ENCODE measurements at regions of chr6 and their contacts with region 1.

Region 1: GRCh38 chr6:35731736-35732532 is 4.9 kb upstream of the ARMC12 start:
- DNase-seq: peak; percentile 91 to 98 (median 96)
- ATAC-seq: peak; percentile 79
- H3K4me3 ChIP-seq: peak overlapping the region; percentile 94
- H3K4me3 Mint-ChIP-seq: peak overlapping the region; percentile 76 to 92 (median 88)
- H3K27ac ChIP-seq: peak overlapping the region; percentile 97
- H3K27ac Mint-ChIP-seq: peak overlapping the region; percentile 90 to 99 (median 94)
- H3K4me1 ChIP-seq: peaks cover 68 to 83% of the 10 kb centered on the region in 2 donors
- H3K4me1 Mint-ChIP-seq: peaks cover 50 to 87% (median 75%) of the 10 kb centered on the region in 7 donors
- H3K27me3 ChIP-seq: no peaks in the 10 kb centered on the region
- H3K27me3 Mint-ChIP-seq: no peaks in the 10 kb centered on the region

Region 2: GRCh38 chr6:35516642-35517041 is 215.3 kb before region 1 on chr6:
- CTCF ChIA-PET with region 1: interaction called, 64 read pairs
- POLR2A ChIA-PET with region 1: no interaction called
- intact Hi-C with region 1: no loop called
- DNase-seq: no peak
- ATAC-seq: no peak
- H3K4me3 ChIP-seq: no peak overlapping the region
- H3K4me3 Mint-ChIP-seq: no peak overlapping the region
- H3K27ac ChIP-seq: no peak overlapping the region
- H3K27ac Mint-ChIP-seq: peak overlapping the region in 1 of 9 donors; percentile 48
- H3K4me1 ChIP-seq: peaks cover 0 to 7% of the 10 kb centered on the region in 2 donors
- H3K4me1 Mint-ChIP-seq: peaks cover 0 to 2% (median 0%) of the 10 kb centered on the region in 7 donors
- H3K27me3 ChIP-seq: peaks cover 0 to 3% of the 10 kb centered on the region in 2 donors
- H3K27me3 Mint-ChIP-seq: peaks cover 0 to 17% (median 0%) of the 10 kb centered on the region in 5 donors

Region 3: DNA sequence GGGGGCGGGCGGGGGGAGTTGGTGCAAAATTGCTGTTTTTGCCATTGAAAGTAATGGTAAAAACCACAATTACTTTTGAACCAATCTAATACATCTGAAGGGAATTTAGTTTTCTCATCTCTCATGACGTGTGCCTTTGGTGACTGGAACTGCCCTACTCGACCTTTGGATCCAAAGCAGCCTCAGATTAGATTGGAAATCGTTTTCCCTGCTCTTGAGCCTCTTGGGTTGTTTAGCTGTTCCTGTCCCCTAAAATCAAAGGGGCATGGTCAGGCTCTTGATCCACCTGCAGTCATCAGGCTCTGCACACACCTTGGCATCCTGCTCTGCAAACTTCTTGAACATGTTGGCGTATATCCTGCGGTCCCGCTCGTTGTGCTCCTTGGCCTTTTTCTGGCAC is 155.3 kb before region 1 on chr6:
- CTCF ChIA-PET with region 1: interaction called, 141 read pairs
- POLR2A ChIA-PET with region 1: interaction called, 8 read pairs
- intact Hi-C with region 1: no loop called
- DNase-seq: no peak
- ATAC-seq: no peak
- H3K4me3 ChIP-seq: no peak overlapping the region
- H3K4me3 Mint-ChIP-seq: no peak overlapping the region
- H3K27ac ChIP-seq: no peak overlapping the region
- H3K27ac Mint-ChIP-seq: peak overlapping the region in 6 of 9 donors; percentile 43 to 72 (median 66)
- H3K4me1 ChIP-seq: peaks cover 0 to 4% of the 10 kb centered on the region in 2 donors
- H3K4me1 Mint-ChIP-seq: peaks cover 1 to 28% (median 14%) of the 10 kb centered on the region in 7 donors
- H3K27me3 ChIP-seq: no peaks in the 10 kb centered on the region
- H3K27me3 Mint-ChIP-seq: no peaks in the 10 kb centered on the region

Region 4: GRCh38 chr6:35601331-35602132 is 130.4 kb before region 1 on chr6:
- CTCF ChIA-PET with region 1: interaction called, 43 read pairs
- POLR2A ChIA-PET with region 1: interaction called, 157 read pairs
- intact Hi-C with region 1: loop called (anchors 1 to 2 kb)
- DNase-seq: peak in 8 of 9 donors; percentile 42 to 96 (median 92)
- ATAC-seq: peak; percentile 90
- H3K4me3 ChIP-seq: peak overlapping the region; percentile 58
- H3K4me3 Mint-ChIP-seq: peak overlapping the region; percentile 69 to 90 (median 86)
- H3K27ac ChIP-seq: peak overlapping the region; percentile 87
- H3K27ac Mint-ChIP-seq: peak overlapping the region; percentile 90 to 97 (median 93)
- H3K4me1 ChIP-seq: peaks cover 77 to 80% of the 10 kb centered on the region in 2 donors
- H3K4me1 Mint-ChIP-seq: peaks cover 35 to 90% (median 78%) of the 10 kb centered on the region in 7 donors
- H3K27me3 ChIP-seq: no peaks in the 10 kb centered on the region
- H3K27me3 Mint-ChIP-seq: no peaks in the 10 kb centered on the region

Region 5: GRCh38 chr6:35663447-35664235 is 68.3 kb before region 1 on chr6:
- CTCF ChIA-PET with region 1: interaction called, 20 read pairs
- POLR2A ChIA-PET with region 1: interaction called, 50 read pairs
- intact Hi-C with region 1: loop called in 1 of 2 experiments (anchors 1 kb)
- DNase-seq: peak in 6 of 9 donors; percentile 28 to 45 (median 36)
- ATAC-seq: peak; percentile 82
- H3K4me3 ChIP-seq: peak overlapping the region; percentile 21
- H3K4me3 Mint-ChIP-seq: no peak overlapping the region
- H3K27ac ChIP-seq: peak overlapping the region; percentile 76
- H3K27ac Mint-ChIP-seq: no peak overlapping the region
- H3K4me1 ChIP-seq: peaks cover 25 to 46% of the 10 kb centered on the region in 2 donors
- H3K4me1 Mint-ChIP-seq: peaks cover 8 to 27% (median 18%) of the 10 kb centered on the region in 7 donors
- H3K27me3 ChIP-seq: no peaks in the 10 kb centered on the region
- H3K27me3 Mint-ChIP-seq: no peaks in the 10 kb centered on the region

Region 6: GRCh38 chr6:35688581-35689322 is 43.2 kb before region 1 on chr6 and contains the start of gene FKBP5:
- CTCF ChIA-PET with region 1: interaction called, 19 read pairs
- POLR2A ChIA-PET with region 1: interaction called, 79 read pairs
- intact Hi-C with region 1: loop called (anchors 1 kb)
- DNase-seq: peak; percentile 76 to 92 (median 82)
- ATAC-seq: peak; percentile 96
- H3K4me3 ChIP-seq: peak within 1 kb of the TSS; percentile 99
- H3K4me3 Mint-ChIP-seq: peak within 1 kb of the TSS; percentile 90 to 100 (median 97)
- H3K27ac ChIP-seq: peak within 1 kb of the TSS; percentile 92
- H3K27ac Mint-ChIP-seq: peak within 1 kb of the TSS; percentile 89 to 98 (median 95)
- H3K4me1 ChIP-seq: peaks cover 5 to 13% of the 10 kb centered on the region in 2 donors
- H3K4me1 Mint-ChIP-seq: peaks cover 6 to 18% (median 15%) of the 10 kb centered on the region in 7 donors
- H3K27me3 ChIP-seq: no peaks in the 10 kb centered on the region
- H3K27me3 Mint-ChIP-seq: no peaks in the 10 kb centered on the region
- total RNA-seq, gene FKBP5: 56.7 to 83.3 (median 79.4) TPM

Region 7: DNA sequence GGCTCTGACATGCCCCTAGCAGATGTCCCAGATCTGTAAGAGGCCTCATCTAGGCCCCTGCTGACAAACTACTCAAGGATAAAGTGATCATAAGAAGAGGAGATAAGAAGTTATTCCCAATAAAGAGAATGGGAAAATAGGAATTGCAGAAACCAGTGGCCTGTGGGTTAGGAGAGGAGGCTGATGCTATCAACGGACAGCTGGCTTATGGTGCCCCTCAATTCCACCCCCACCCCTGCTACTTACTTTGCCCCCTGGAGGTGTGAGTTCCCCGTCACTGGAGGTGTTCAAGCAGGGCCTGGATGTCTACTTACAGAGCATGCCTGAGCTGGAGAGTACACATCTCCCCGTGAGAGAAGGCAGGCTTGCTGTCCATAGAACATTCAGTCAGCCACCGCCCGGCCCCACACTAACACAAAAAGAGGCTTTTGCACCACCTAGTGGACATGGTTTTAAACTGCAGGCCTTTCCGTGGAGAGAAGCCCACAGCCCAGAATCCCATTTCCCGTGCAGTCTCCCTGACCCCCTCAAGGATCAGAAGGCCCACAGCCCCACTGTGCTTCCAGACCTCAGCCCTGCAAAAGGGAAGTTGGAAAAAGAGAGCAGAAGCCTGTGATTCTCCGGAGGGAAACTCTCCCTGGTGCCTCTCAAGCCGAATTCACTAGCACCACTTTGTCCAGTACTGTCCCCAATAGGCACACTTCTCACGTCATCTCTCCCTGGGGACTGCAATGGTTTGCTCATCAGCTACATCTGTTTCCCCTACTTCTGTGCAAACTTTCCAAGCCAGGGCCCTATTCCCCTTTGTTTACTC is 628.5 kb after region 1 on chr6:
- CTCF ChIA-PET with region 1: no interaction called
- POLR2A ChIA-PET with region 1: no interaction called
- intact Hi-C with region 1: loop called in 1 of 2 experiments (anchors 2 kb)
- DNase-seq: peak; percentile 37 to 74 (median 66)
- ATAC-seq: peak; percentile 95
- H3K4me3 ChIP-seq: no peak overlapping the region
- H3K4me3 Mint-ChIP-seq: no peak overlapping the region
- H3K27ac ChIP-seq: no peak overlapping the region
- H3K27ac Mint-ChIP-seq: peak overlapping the region in 2 of 9 donors; percentile 24 to 55
- H3K4me1 ChIP-seq: peaks cover 4 to 6% of the 10 kb centered on the region in 2 donors
- H3K4me1 Mint-ChIP-seq: peaks cover 0 to 30% (median 4%) of the 10 kb centered on the region in 7 donors
- H3K27me3 ChIP-seq: no peaks in the 10 kb centered on the region
- H3K27me3 Mint-ChIP-seq: peaks cover 0 to 15% (median 4%) of the 10 kb centered on the region in 5 donors

Measured in naive thymus-derived CD4-positive, alpha-beta T cell (primary cell).